ENCODE measurements at regions of chr1 and their contacts with region 1.

Region 1: GRCh38 chr1:168342572-168343280 is 62.0 kb downstream of the TBX19 start:
- DNase-seq: peak; percentile 52
- ATAC-seq: peak; percentile 94
- H3K4me3 ChIP-seq: peak overlapping the region; percentile 31 to 62 (median 48); a peak in 5 of 6 replicates
- H3K27ac ChIP-seq: no peak overlapping the region
- H3K4me1 ChIP-seq: peaks cover 14% of the 10 kb centered on the region
- H3K27me3 ChIP-seq: no peaks in the 10 kb centered on the region; a peak in 1 of 5 replicates
- CTCF ChIP-seq: peak; percentile 94
- EP300 ChIP-seq: no peak
- POLR2A ChIP-seq: no peak
- RAD21 ChIP-seq: peak; percentile 81

Region 2: GRCh38 chr1:168360151-168361021 is 17.7 kb after region 1 on chr1:
- CTCF ChIA-PET with region 1: interaction called, 6 read pairs
- POLR2A ChIA-PET with region 1: interaction called, 15 read pairs
- in situ Hi-C with region 1: no loop called
- intact Hi-C with region 1: loop called (anchors 1 kb)
- DNase-seq: no peak
- ATAC-seq: no peak
- H3K4me3 ChIP-seq: no peak overlapping the region
- H3K27ac ChIP-seq: no peak overlapping the region
- H3K4me1 ChIP-seq: peaks cover 31% of the 10 kb centered on the region
- H3K27me3 ChIP-seq: no peaks in the 10 kb centered on the region
- CTCF ChIP-seq: no peak
- EP300 ChIP-seq: no peak
- POLR2A ChIP-seq: no peak
- RAD21 ChIP-seq: no peak

Region 3: DNA sequence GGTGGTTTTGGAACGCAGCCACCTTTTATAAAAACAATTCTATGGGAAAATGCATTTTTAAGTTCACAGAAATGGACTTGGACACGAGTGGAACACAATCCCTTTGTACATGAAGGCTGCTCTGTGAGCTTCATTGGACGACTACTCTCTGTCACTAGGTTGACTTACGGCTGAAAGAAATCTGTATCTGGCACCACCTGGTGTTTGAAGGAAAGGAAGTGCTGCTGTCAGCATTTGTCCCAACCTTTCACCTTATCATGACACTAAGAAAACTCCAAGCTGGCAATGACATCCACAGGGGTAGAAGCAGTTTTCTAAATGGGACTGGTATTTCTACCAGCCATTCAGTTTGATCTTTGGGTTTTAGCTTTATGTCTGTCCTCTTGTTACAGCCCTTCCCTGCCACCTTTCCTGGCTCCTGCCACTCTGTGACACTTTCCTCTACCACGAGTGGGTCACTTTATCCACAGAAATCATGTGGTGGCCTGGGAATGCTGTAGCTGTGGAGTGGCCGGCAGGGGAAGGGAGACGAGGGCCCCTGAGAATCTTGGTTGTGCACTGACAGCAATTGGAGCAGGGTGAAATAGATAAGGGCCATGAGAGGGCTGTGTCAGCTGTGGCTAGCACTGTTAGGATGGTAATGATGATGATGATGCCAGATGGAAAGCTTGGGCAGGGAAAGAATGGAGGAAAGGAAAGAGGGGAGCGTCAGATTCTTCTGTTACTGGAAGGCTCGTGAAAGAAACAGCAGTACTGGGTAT is 23.2 kb after region 1 on chr1:
- CTCF ChIA-PET with region 1: interaction called, 6 read pairs
- POLR2A ChIA-PET with region 1: interaction called, 5 read pairs
- in situ Hi-C with region 1: no loop called
- intact Hi-C with region 1: loop called (anchors 1 kb)
- DNase-seq: peak; percentile 29
- ATAC-seq: peak; percentile 38; the same call in 1 of the 3 replicates
- H3K4me3 ChIP-seq: no peak overlapping the region
- H3K27ac ChIP-seq: no peak overlapping the region
- H3K4me1 ChIP-seq: peaks cover 48% of the 10 kb centered on the region
- H3K27me3 ChIP-seq: no peaks in the 10 kb centered on the region
- CTCF ChIP-seq: peak; percentile 28
- EP300 ChIP-seq: no peak
- POLR2A ChIP-seq: no peak
- RAD21 ChIP-seq: no peak

Region 4: GRCh38 chr1:168408536-168409242 is 66.0 kb after region 1 on chr1:
- CTCF ChIA-PET with region 1: no interaction called
- POLR2A ChIA-PET with region 1: no interaction called
- in situ Hi-C with region 1: no loop called
- intact Hi-C with region 1: no loop called
- DNase-seq: peak; percentile 31
- ATAC-seq: no peak
- H3K4me3 ChIP-seq: no peak overlapping the region
- H3K27ac ChIP-seq: no peak overlapping the region
- H3K4me1 ChIP-seq: no peaks in the 10 kb centered on the region
- H3K27me3 ChIP-seq: no peaks in the 10 kb centered on the region
- CTCF ChIP-seq: no peak
- EP300 ChIP-seq: no peak
- POLR2A ChIP-seq: no peak
- RAD21 ChIP-seq: no peak

Region 5: GRCh38 chr1:168585191-168585590 is 242.5 kb after region 1 on chr1:
- CTCF ChIA-PET with region 1: no interaction called
- POLR2A ChIA-PET with region 1: no interaction called
- in situ Hi-C with region 1: loop called (anchors 10 kb)
- intact Hi-C with region 1: no loop called
- DNase-seq: no peak
- ATAC-seq: no peak
- H3K4me3 ChIP-seq: no peak overlapping the region
- H3K27ac ChIP-seq: no peak overlapping the region
- H3K4me1 ChIP-seq: no peaks in the 10 kb centered on the region
- H3K27me3 ChIP-seq: no peaks in the 10 kb centered on the region; a peak in 1 of 5 replicates
- CTCF ChIP-seq: no peak
- EP300 ChIP-seq: no peak
- POLR2A ChIP-seq: no peak
- RAD21 ChIP-seq: no peak

Region 6: GRCh38 chr1:168664069-168664834 is 321.5 kb after region 1 on chr1:
- CTCF ChIA-PET with region 1: no interaction called
- POLR2A ChIA-PET with region 1: no interaction called
- in situ Hi-C with region 1: no loop called
- intact Hi-C with region 1: no loop called
- DNase-seq: peak; percentile 56
- ATAC-seq: peak; percentile 74
- H3K4me3 ChIP-seq: no peak overlapping the region
- H3K27ac ChIP-seq: no peak overlapping the region
- H3K4me1 ChIP-seq: peaks cover 15% of the 10 kb centered on the region
- H3K27me3 ChIP-seq: no peaks in the 10 kb centered on the region
- CTCF ChIP-seq: no peak
- EP300 ChIP-seq: peak in 1 of 2 experiments; percentile 37; a peak in 1 of 4 replicates
- POLR2A ChIP-seq: no peak
- RAD21 ChIP-seq: no peak

Measured in HepG2 (cell line).